ENCODE measurements at regions of chr1 and their contacts with region 1.

Region 1: GRCh38 chr1:180482425-180483275 is 19.7 kb downstream of the ACBD6 start:
- DNase-seq: no peak
- H3K4me3 Mint-ChIP-seq: no peak overlapping the region
- H3K27ac Mint-ChIP-seq: no peak overlapping the region
- H3K4me1 Mint-ChIP-seq: peaks cover 15% of the 10 kb centered on the region
- H3K27me3 Mint-ChIP-seq: no peaks in the 10 kb centered on the region

Region 2: DNA sequence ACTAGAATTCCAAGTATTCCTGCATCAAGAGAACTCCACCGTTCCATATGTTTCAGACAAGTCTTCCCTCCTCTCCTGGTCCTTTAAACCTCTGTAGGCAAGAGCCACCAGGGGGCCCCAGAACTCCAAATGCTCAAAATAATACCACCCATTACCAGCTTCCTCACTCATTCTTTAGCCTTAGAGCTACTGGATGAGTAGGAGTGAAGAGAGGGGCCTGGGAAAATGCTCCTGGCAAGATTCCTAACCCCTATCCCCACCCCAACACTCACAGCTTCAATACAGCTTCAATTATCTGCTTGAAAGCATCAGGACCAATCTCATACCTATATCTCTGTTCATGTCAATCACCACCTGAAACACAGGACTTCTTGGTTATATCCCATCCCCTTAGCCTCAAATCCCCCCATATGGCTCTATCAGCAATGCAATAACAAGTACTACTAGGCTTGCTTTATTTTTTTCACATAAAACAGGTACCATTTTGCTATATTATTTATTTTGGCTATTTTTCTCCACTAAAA is 614.8 kb before region 1 on chr1:
- CTCF ChIA-PET with region 1: no interaction called
- POLR2A ChIA-PET with region 1: no interaction called
- intact Hi-C with region 1: loop called (anchors 5 kb)
- DNase-seq: peak; percentile 63
- H3K4me3 Mint-ChIP-seq: no peak overlapping the region
- H3K27ac Mint-ChIP-seq: no peak overlapping the region
- H3K4me1 Mint-ChIP-seq: peaks cover 18% of the 10 kb centered on the region
- H3K27me3 Mint-ChIP-seq: no peaks in the 10 kb centered on the region

Region 3: GRCh38 chr1:180188091-180188506 is 294.6 kb before region 1 on chr1:
- CTCF ChIA-PET with region 1: interaction called, 13 read pairs
- POLR2A ChIA-PET with region 1: no interaction called
- intact Hi-C with region 1: loop called (anchors 10 kb)
- DNase-seq: peak; percentile 26
- H3K4me3 Mint-ChIP-seq: no peak overlapping the region
- H3K27ac Mint-ChIP-seq: no peak overlapping the region
- H3K4me1 Mint-ChIP-seq: no peaks in the 10 kb centered on the region
- H3K27me3 Mint-ChIP-seq: no peaks in the 10 kb centered on the region

Region 4: DNA sequence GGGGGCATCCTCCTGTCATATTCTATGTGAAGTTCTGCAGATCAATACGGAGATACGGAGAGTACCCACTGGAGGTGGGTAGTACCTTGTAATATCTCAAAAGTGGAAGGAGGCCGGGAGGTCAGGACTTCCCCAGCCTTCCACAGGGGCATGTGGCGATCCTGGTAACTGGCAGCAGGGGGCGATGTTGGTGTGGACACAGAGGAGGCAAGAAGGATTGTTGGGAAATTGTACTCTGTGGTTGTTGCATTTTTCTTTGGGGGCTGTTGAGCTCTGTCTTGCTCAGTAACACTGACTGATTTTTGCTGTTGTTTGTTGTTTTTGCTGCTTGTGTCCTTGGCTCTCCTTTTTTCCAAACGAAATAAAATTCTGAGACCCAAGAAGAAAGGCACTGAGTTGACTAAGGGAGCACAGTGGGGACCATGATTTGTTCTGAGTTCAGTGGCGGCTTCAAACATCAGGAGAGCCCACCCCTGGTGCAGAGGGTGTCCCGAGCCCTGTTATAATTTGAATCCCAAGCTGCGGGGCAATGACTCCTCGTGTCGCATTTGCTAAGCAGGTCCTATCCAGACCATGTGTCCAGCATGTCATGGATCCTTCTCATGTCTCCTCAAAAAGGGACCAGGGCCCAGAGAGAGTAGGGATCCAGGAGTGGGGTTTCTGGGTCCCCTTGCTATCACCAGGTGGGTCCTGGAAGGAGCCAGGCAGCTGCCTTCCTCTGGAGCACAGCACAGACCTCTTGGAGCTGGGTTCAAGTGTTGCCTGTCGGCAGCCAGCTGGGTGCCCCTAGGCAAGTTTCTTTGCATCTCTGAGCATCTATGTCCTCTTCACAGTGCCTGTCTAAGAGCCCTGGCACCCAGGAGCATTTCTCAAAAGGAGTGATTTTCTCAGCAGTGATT is 229.8 kb before region 1 on chr1:
- CTCF ChIA-PET with region 1: interaction called, 46 read pairs
- POLR2A ChIA-PET with region 1: no interaction called
- intact Hi-C with region 1: loop called (anchors 1 kb)
- DNase-seq: peak; percentile 85
- H3K4me3 Mint-ChIP-seq: no peak overlapping the region
- H3K27ac Mint-ChIP-seq: no peak overlapping the region
- H3K4me1 Mint-ChIP-seq: no peaks in the 10 kb centered on the region
- H3K27me3 Mint-ChIP-seq: peaks cover 58% of the 10 kb centered on the region

Region 5: DNA sequence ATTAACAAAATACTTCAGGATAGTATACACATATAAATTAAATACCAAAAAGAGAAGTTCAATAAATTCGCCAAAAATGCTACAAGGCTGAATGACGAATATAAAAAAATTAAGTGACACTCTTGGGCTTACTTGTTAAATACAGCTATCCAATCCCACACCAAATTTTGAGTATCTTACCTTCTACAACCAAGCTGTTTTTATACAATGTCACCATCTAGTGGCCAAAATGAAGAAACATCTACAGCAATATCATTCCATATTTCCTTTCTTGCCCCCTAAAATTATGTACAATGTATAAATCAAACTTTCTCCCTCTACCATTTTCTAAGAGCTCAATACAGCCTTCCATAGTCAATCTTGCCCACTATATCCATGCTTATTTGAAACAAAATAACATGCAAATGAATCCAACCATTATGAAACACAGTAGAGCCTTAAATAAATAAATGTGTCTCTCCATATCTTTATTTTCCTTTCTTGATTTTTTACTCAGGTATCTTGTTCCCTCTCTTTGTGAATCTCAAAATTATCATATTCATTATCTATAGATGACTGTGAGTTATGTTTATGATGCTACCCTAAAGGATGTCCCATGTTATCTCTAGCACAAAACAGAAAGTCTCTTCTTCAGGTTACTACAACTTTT is 66.5 kb before region 1 on chr1:
- CTCF ChIA-PET with region 1: no interaction called
- POLR2A ChIA-PET with region 1: no interaction called
- intact Hi-C with region 1: loop called (anchors 5 kb)
- DNase-seq: no peak
- H3K4me3 Mint-ChIP-seq: no peak overlapping the region
- H3K27ac Mint-ChIP-seq: no peak overlapping the region
- H3K4me1 Mint-ChIP-seq: no peaks in the 10 kb centered on the region
- H3K27me3 Mint-ChIP-seq: no peaks in the 10 kb centered on the region

Region 6: GRCh38 chr1:180494370-180494769 is 11.7 kb after region 1 on chr1:
- CTCF ChIA-PET with region 1: interaction called, 14 read pairs
- POLR2A ChIA-PET with region 1: no interaction called
- intact Hi-C with region 1: no loop called
- DNase-seq: no peak
- H3K4me3 Mint-ChIP-seq: no peak overlapping the region
- H3K27ac Mint-ChIP-seq: no peak overlapping the region
- H3K4me1 Mint-ChIP-seq: peaks cover 14% of the 10 kb centered on the region
- H3K27me3 Mint-ChIP-seq: no peaks in the 10 kb centered on the region

Region 7: GRCh38 chr1:180510882-180511281 is 28.2 kb after region 1 on chr1:
- CTCF ChIA-PET with region 1: no interaction called
- POLR2A ChIA-PET with region 1: no interaction called
- intact Hi-C with region 1: no loop called
- DNase-seq: no peak
- H3K4me3 Mint-ChIP-seq: no peak overlapping the region
- H3K27ac Mint-ChIP-seq: no peak overlapping the region
- H3K4me1 Mint-ChIP-seq: peaks cover 4% of the 10 kb centered on the region
- H3K27me3 Mint-ChIP-seq: peaks cover 5% of the 10 kb centered on the region

Region 8: DNA sequence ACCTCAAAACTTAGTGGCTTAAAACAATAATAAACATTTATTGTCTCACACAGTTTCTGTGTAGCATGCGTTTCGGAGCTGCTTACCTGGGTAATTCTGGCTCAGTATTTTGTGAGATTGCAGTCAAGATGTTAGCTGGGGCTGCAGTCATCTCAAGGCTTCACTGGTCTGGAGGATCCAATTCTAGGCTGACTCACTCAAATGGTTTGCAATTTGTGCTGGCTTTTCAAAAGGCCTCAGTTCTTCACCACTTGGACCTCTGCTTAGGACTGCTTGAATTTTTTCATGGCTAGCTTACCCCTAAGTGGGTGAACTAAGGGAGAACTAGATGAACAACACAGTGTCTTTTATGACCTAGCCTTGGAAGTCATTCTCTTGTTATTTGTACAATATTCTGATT is 170.1 kb after region 1 on chr1:
- CTCF ChIA-PET with region 1: no interaction called
- POLR2A ChIA-PET with region 1: no interaction called
- intact Hi-C with region 1: no loop called
- DNase-seq: no peak
- H3K4me3 Mint-ChIP-seq: no peak overlapping the region
- H3K27ac Mint-ChIP-seq: no peak overlapping the region
- H3K4me1 Mint-ChIP-seq: peaks cover 4% of the 10 kb centered on the region
- H3K27me3 Mint-ChIP-seq: no peaks in the 10 kb centered on the region